Activated naive CD8-positive, alpha-beta T cell treated with anti-CD3 and anti-CD28 coated beads, Interleukin-2, amount 10 ng/mL, durations not matched to agents 7 days and 5 days (primary cell): ENCODE measurements at regions of chr19 and their contacts with region 1.

Region 1: DNA sequence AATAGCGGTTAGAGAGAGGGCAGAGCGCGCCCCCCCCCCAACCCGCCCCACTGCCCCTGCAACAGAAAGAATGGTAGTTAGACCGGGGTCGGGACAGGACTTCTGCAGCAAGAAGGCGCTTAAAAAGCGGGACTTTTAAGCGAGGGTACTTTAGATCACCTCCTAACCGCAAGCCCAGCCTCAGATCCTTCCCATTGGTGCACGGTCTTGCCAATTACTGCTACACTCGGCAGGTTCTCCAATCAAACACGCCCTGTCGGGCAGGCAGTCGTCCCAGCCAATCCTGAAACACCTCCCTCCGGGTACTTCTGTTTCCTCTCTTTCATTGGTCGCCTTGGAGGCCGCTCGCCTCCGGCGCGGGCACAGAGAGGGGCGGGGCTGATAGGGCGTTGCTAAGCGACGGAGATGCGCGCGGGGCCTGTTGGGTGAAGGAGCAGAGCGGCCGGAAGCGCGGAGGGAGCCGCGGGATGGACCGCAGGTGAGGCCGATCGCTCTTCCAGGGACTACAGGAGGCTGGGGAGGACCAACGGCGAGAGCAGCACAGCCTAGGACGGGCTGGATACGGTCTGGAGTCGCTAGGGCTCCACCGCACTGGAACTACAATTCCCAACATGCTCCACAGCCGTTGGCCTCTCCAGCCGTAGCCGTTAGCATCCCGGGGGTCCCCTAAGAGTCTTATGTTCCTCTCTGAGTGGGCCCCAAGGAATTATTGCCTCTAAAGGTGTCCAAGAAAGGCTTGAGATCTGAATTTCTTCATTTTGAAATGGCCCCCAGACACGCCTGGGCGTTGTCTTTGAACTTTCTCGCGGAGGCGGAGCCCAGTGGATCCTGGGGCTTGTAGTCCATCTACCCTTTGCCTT is at the start of gene PROSER3:
- DNase-seq: peak; percentile 98
- ATAC-seq: peak; percentile 96
- H3K4me3 Mint-ChIP-seq: peak within 1 kb of the TSS; percentile 90
- H3K27ac Mint-ChIP-seq: peak within 1 kb of the TSS; percentile 93
- H3K4me1 Mint-ChIP-seq: peaks cover 23% of the 10 kb centered on the region
- H3K27me3 Mint-ChIP-seq: peaks cover 3% of the 10 kb centered on the region
- total RNA-seq, gene PROSER3: 53.0 to 59.9 TPM

Region 2: GRCh38 chr19:35740423-35741202 is 17.4 kb before region 1 on chr19:
- POLR2A ChIA-PET with region 1: interaction called, 17 read pairs
- DNase-seq: peak; percentile 95
- ATAC-seq: peak; percentile 68
- H3K4me3 Mint-ChIP-seq: peak overlapping the region; percentile 96
- H3K27ac Mint-ChIP-seq: peak overlapping the region; percentile 89
- H3K4me1 Mint-ChIP-seq: peaks cover 31% of the 10 kb centered on the region
- H3K27me3 Mint-ChIP-seq: no peaks in the 10 kb centered on the region

Region 3: GRCh38 chr19:35822579-35822978 is 64.6 kb after region 1 on chr19:
- POLR2A ChIA-PET with region 1: no interaction called
- DNase-seq: no peak
- ATAC-seq: no peak
- H3K4me3 Mint-ChIP-seq: no peak overlapping the region
- H3K27ac Mint-ChIP-seq: no peak overlapping the region
- H3K4me1 Mint-ChIP-seq: peaks cover 7% of the 10 kb centered on the region
- H3K27me3 Mint-ChIP-seq: peaks cover 24% of the 10 kb centered on the region